Ovary (tissue), 10 donors: ENCODE measurements at regions of chr17 and their contacts with region 1.

Region 1: GRCh38 chr17:63434876-63435684 is 11.0 kb downstream of the CYB561 start:
- DNase-seq: peak in 1 of 5 donors; percentile 42
- H3K4me3 ChIP-seq: no peak overlapping the region
- H3K27ac ChIP-seq: no peak overlapping the region
- H3K4me1 ChIP-seq: peaks cover 7% of the 10 kb centered on the region
- H3K27me3 ChIP-seq: no peaks in the 10 kb centered on the region
- CTCF ChIP-seq: no peak
- EP300 ChIP-seq: no peak
- POLR2A ChIP-seq: no peak

Region 2: GRCh38 chr17:63246344-63246743 is 188.7 kb before region 1 on chr17:
- intact Hi-C with region 1: no loop called
- DNase-seq: no peak
- H3K4me3 ChIP-seq: no peak overlapping the region
- H3K27ac ChIP-seq: no peak overlapping the region
- H3K4me1 ChIP-seq: peaks cover 1% of the 10 kb centered on the region
- H3K27me3 ChIP-seq: no peaks in the 10 kb centered on the region
- CTCF ChIP-seq: no peak
- EP300 ChIP-seq: no peak
- POLR2A ChIP-seq: no peak

Region 3: DNA sequence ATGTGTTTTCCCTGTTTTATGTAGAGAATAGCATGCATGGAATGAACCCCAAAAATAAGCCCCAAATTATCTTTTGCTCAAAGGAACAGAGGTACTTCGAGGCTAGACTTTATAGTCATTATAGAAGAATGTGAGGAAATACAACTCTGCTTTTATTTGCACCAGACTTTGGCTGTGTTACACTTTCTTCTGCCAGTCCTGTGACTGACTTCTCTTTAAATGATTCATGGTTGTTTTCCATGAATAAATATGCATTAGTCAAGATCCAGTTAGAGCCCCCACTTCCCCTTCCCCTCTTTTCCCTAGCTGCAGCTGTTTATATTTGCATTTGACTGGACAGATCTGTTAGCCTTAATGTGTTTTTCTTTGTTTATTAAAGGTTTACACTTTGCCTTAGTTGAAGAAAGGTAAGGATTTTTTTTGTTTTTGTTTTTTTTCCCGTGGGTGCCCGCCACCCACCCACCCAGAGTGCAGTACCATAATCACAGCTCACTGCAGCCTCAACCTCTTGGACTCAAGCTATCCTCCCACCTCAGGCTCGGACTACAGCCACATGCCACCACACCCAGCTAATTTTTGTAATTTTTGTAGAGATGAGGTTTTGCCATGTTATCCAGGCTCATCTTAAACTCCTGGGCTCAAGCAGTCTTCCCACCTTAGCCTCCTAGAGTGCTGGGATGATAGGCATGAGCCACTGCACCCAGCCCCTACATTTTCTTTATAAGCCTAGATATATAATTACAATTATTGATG is 141.6 kb before region 1 on chr17:
- intact Hi-C with region 1: no loop called
- DNase-seq: no peak
- H3K4me3 ChIP-seq: no peak overlapping the region
- H3K27ac ChIP-seq: no peak overlapping the region
- H3K4me1 ChIP-seq: no peaks in the 10 kb centered on the region
- H3K27me3 ChIP-seq: no peaks in the 10 kb centered on the region
- CTCF ChIP-seq: no peak
- EP300 ChIP-seq: no peak
- POLR2A ChIP-seq: no peak

Region 4: GRCh38 chr17:63478791-63479494 is 43.9 kb after region 1 on chr17:
- intact Hi-C with region 1: loop called in 1 of 4 experiments (anchors 5 kb)
- DNase-seq: peak; percentile 60 to 75 (median 68)
- H3K4me3 ChIP-seq: no peak overlapping the region
- H3K27ac ChIP-seq: no peak overlapping the region
- H3K4me1 ChIP-seq: peaks cover 16% of the 10 kb centered on the region
- H3K27me3 ChIP-seq: no peaks in the 10 kb centered on the region
- CTCF ChIP-seq: peak in 2 of 3 donors; percentile 40 to 46
- EP300 ChIP-seq: no peak
- POLR2A ChIP-seq: no peak

Region 5: DNA sequence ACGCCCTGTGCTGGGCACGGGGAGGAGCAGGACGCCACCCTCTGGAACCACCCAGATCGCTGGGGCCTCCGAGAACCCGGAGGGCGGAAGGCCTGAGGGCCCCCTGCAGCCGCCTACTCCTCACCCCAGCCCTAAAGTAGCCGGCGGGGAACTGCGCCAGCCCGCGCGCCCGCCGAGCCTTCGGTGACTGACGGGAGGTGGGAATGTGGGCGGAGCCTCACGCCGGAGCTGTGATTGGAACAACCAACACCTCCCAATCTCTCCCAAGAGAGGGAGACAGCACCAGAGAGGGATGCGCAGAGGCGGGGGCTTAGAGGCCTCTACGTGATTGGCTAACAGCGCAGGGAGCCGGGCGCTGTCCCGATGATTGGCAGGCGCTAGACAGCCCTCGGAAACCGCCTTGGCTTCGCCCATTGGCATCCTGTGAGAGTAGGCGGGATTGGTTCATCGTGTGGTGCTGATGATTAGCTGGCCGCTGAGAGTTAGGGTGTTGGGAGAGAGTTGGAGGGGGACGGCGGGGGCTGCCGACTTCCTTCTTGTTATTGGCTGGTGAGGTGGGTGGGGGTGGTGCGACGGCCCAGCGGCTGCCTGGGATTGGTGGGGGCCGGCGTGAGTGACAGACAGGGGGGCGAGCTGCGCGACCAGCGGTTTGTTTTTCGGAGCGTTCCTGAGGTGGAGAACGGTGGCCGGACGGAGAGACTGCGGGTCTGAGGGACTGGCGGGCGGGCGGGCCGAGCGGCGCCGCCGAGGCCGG is 186.9 kb after region 1 on chr17 and contains the start of gene MAP3K3:
- intact Hi-C with region 1: loop called in 1 of 4 experiments (anchors 5 kb)
- DNase-seq: peak; percentile 98 to 99 (median 99)
- H3K4me3 ChIP-seq: peak within 1 kb of the TSS; percentile 64
- H3K27ac ChIP-seq: peak within 1 kb of the TSS; percentile 72 to 89
- H3K4me1 ChIP-seq: peaks cover 6% of the 10 kb centered on the region
- H3K27me3 ChIP-seq: no peaks in the 10 kb centered on the region
- CTCF ChIP-seq: peak in 2 of 3 donors; percentile 11 to 14
- EP300 ChIP-seq: no peak
- POLR2A ChIP-seq: peak; percentile 75
- total RNA-seq, gene MAP3K3: 32.2 to 41.0 (median 36.3) TPM